PC-3 (cell line): ENCODE measurements at regions of chr15 and their contacts with region 1.

Region 1: GRCh38 chr15:66774001-66774814 is 72.2 kb downstream of the SMAD6 start:
- DNase-seq: peak; percentile 88
- ATAC-seq: peak; percentile 87
- H3K4me3 ChIP-seq: no peak overlapping the region
- H3K27ac ChIP-seq: no peak overlapping the region
- H3K4me1 ChIP-seq: peaks cover 34% of the 10 kb centered on the region
- H3K27me3 ChIP-seq: no peaks in the 10 kb centered on the region
- CTCF ChIP-seq: peak; percentile 94

Region 2: DNA sequence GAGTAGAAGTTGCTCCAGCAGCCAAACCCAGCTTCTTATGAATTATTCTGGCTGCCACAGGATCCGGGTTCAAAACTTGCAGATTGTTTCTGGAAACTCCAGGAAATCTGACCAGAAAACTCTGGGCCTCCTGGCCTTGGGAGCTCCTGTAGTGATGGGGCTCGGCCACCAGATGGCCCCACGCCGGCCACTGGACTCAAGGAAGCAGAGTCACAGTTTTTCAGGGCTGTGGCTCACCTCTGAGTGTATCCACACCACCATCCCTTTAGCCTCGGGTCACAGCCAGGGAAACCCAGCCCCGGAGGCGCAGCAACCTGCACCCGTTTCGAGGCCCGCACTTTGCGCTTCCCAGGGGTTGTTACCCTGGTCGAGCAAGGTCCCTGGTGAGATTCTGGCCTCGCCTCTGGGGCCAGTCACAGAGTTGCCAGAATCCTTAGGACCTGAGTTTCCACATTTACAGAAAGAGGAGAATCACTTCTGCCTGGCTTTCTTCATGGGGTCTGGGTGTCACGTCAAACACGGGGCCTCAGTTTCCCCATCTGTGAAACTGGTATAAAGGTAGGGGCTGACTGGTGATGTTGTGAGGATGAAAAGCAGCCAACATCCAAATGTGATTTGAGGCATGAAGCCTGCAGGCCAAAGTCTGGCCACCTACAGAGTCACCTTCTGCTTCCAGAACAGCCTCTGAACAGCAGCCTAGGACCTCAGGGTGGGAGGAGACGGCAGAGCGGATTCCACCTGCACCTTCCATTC is 154.9 kb before region 1 on chr15:
- CTCF ChIA-PET with region 1: no interaction called
- POLR2A ChIA-PET with region 1: no interaction called
- intact Hi-C with region 1: loop called (anchors 2 kb)
- DNase-seq: peak; percentile 80
- ATAC-seq: peak; percentile 72
- H3K4me3 ChIP-seq: no peak overlapping the region
- H3K27ac ChIP-seq: no peak overlapping the region
- H3K4me1 ChIP-seq: peaks cover 19% of the 10 kb centered on the region
- H3K27me3 ChIP-seq: no peaks in the 10 kb centered on the region
- CTCF ChIP-seq: peak; percentile 79

Region 3: DNA sequence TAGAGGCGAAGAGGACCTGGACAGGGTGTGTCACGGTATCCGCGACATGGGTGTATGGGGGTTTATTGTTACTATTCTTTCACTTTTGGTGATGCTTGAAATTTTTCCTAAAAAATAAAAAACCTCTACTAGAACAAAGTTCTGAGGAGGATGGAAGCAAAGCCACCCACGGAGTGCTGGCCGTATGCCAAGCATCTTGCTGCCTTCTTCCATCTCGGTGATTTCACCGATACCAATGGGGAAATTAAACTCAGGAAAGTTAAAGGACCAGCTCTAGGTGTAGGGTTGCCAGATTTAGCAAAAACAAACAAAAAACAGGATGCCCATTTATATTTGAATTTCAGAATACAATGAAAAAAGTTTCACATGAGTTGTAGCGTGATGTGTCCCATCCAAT is 38.3 kb before region 1 on chr15:
- CTCF ChIA-PET with region 1: no interaction called
- POLR2A ChIA-PET with region 1: no interaction called
- intact Hi-C with region 1: loop called (anchors 5 kb)
- DNase-seq: no peak
- ATAC-seq: no peak
- H3K4me3 ChIP-seq: no peak overlapping the region
- H3K27ac ChIP-seq: no peak overlapping the region
- H3K4me1 ChIP-seq: peaks cover 21% of the 10 kb centered on the region
- H3K27me3 ChIP-seq: no peaks in the 10 kb centered on the region
- CTCF ChIP-seq: no peak

Region 4: GRCh38 chr15:66803182-66803729 is 29.0 kb after region 1 on chr15:
- CTCF ChIA-PET with region 1: no interaction called
- POLR2A ChIA-PET with region 1: no interaction called
- intact Hi-C with region 1: loop called (anchors 2 kb)
- DNase-seq: peak; percentile 97
- ATAC-seq: peak; percentile 97
- H3K4me3 ChIP-seq: peak overlapping the region; percentile 31; the same call in 1 of the 2 replicates
- H3K27ac ChIP-seq: peak overlapping the region; percentile 85
- H3K4me1 ChIP-seq: peaks cover 56% of the 10 kb centered on the region
- H3K27me3 ChIP-seq: no peaks in the 10 kb centered on the region
- CTCF ChIP-seq: no peak

Region 5: GRCh38 chr15:66819084-66819483 is 44.9 kb after region 1 on chr15:
- CTCF ChIA-PET with region 1: no interaction called
- POLR2A ChIA-PET with region 1: no interaction called
- intact Hi-C with region 1: no loop called
- DNase-seq: peak; percentile 17
- ATAC-seq: peak; percentile 68
- H3K4me3 ChIP-seq: no peak overlapping the region
- H3K27ac ChIP-seq: no peak overlapping the region
- H3K4me1 ChIP-seq: peaks cover 29% of the 10 kb centered on the region
- H3K27me3 ChIP-seq: no peaks in the 10 kb centered on the region
- CTCF ChIP-seq: no peak